ENCODE measurements at regions of chr1 and their contacts with region 1.

Region 1: GRCh38 chr1:150464422-150464826 is 22.8 kb upstream of the TARS2 start:
- DNase-seq: peak; percentile 68
- H3K4me3 ChIP-seq: no peak overlapping the region
- H3K27ac ChIP-seq: no peak overlapping the region
- H3K4me1 ChIP-seq: no peaks in the 10 kb centered on the region
- H3K27me3 ChIP-seq: no peaks in the 10 kb centered on the region
- CTCF ChIP-seq: peak; percentile 74

Region 2: DNA sequence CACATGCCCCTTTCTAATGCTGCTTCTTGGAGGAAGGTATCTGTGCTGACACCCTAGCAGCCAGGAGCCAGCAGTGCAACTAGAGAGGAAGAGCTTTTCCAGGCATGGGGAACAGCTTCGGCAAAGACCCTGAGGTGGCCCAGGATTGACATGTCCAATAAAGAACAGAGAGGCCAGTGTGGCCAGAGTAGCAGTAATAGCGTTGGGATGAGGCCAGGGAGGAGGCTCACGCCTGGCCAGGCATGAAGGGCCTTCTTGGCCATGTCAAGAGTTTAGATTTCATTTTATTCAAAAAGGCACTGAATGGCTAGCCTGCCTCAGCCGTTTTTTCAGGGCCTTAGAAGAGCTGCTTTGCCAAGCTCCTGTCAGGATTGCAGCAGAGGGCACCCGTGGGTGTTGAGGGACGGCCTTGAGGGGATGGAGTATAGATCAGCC is 68.5 kb after region 1 on chr1:
- CTCF ChIA-PET with region 1: no interaction called
- POLR2A ChIA-PET with region 1: no interaction called
- intact Hi-C with region 1: loop called (anchors 5 kb)
- DNase-seq: no peak
- H3K4me3 ChIP-seq: no peak overlapping the region
- H3K27ac ChIP-seq: no peak overlapping the region
- H3K4me1 ChIP-seq: no peaks in the 10 kb centered on the region
- H3K27me3 ChIP-seq: no peaks in the 10 kb centered on the region
- CTCF ChIP-seq: 0 out of 2 replicates have a peak, but pooled peaks have one; percentile 5

Region 3: GRCh38 chr1:150813058-150813707 is 348.8 kb after region 1 on chr1:
- CTCF ChIA-PET with region 1: no interaction called
- POLR2A ChIA-PET with region 1: no interaction called
- intact Hi-C with region 1: loop called (anchors 10 kb)
- DNase-seq: peak; percentile 54
- H3K4me3 ChIP-seq: no peak overlapping the region
- H3K27ac ChIP-seq: no peak overlapping the region
- H3K4me1 ChIP-seq: peaks cover 5% of the 10 kb centered on the region
- H3K27me3 ChIP-seq: no peaks in the 10 kb centered on the region
- CTCF ChIP-seq: peak; percentile 61

Measured in A673 (cell line).